ENCODE measurements at regions of chr16 and their contacts with region 1.

Region 1: DNA sequence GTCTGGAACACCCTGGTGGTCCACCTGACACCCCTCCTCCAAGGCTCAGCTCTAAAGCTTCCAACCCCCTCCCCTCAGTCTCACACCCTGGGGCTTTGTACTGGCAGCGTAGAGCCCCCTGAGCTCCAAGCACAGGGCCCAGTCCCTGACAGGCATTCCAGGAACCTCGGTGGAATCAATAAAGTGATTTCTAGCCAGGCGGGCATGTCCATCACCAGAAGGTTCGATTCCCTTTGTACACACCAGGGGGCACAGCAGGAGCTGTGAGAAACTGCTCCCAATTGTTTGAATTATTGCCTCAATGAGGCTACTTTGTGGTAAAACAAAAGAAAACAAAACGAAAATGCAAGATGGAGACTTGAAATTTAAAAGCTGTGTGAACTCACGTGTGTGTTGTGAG is 51.8 kb downstream of the SMPD3 start:
- DNase-seq: no peak
- ATAC-seq: peak; percentile 29 to 44
- H3K4me3 ChIP-seq: no peak overlapping the region
- H3K27ac ChIP-seq: no peak overlapping the region
- H3K4me1 ChIP-seq: no peaks in the 10 kb centered on the region
- H3K27me3 ChIP-seq: no peaks in the 10 kb centered on the region

Region 2: GRCh38 chr16:68503334-68503733 is 106.9 kb after region 1 on chr16:
- intact Hi-C with region 1: loop called in 2 of 4 experiments (anchors 2 to 10 kb)
- DNase-seq: no peak
- ATAC-seq: no peak
- H3K4me3 ChIP-seq: no peak overlapping the region
- H3K27ac ChIP-seq: no peak overlapping the region
- H3K4me1 ChIP-seq: no peaks in the 10 kb centered on the region
- H3K27me3 ChIP-seq: no peaks in the 10 kb centered on the region

Region 3: GRCh38 chr16:68508641-68509240 is 112.3 kb after region 1 on chr16:
- intact Hi-C with region 1: loop called in 3 of 4 experiments (anchors 2 to 10 kb)
- DNase-seq: no peak
- ATAC-seq: no peak
- H3K4me3 ChIP-seq: no peak overlapping the region
- H3K27ac ChIP-seq: no peak overlapping the region
- H3K4me1 ChIP-seq: no peaks in the 10 kb centered on the region
- H3K27me3 ChIP-seq: no peaks in the 10 kb centered on the region

Region 4: DNA sequence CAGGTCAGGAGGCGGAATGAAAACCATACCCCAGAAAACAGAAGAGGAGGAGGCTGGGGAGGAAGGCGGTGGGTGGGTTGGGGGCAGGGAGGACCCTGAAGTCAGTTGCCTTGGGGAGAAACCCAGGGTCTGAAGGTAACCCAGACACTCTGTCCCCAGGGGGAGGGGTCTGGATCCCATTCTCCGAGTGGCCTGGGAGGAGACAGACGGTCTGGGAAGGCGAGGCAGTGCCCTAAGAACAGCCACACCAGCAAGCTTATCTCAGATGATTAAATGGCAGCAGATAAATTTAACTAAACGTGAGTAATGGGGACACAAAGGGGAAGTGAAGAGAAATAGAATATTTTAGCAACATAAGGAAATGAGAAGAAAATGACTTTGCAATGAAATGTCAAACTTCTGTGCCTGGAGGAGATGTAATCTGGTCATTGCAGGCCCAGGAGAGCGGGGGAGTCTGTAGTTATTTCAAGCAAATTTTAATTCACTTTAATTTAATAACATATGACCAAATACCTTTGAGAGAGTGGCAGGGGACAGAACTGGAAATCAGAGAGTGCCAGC is 121.2 kb after region 1 on chr16:
- intact Hi-C with region 1: loop called in 1 of 4 experiments (anchors 10 kb)
- DNase-seq: no peak
- ATAC-seq: no peak
- H3K4me3 ChIP-seq: no peak overlapping the region
- H3K27ac ChIP-seq: no peak overlapping the region
- H3K4me1 ChIP-seq: no peaks in the 10 kb centered on the region
- H3K27me3 ChIP-seq: no peaks in the 10 kb centered on the region

Region 5: DNA sequence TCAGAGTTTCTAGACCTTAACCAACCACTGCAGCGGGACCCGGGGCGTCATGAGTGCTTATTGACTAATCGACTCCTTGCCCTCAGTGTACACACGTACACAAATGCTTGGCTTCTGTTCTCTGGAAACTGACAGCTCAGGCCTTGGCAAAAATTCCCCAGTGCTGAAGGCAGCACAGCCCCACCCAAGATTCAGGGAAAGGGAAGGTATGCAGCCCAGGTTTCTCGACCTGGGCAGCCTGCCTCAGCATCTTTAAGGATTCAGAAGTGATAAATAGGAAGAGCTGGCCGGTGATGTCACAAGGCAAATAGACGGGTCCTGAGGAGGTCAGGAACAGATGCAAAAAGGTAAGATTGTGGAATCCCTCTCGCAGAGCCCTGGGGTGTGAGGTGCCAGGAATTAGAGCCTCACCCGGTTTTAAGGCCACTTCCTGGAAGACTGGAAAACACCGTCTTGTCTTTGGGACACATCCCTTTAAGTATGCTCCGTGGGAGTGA is 239.6 kb after region 1 on chr16:
- intact Hi-C with region 1: no loop called
- DNase-seq: no peak
- ATAC-seq: no peak
- H3K4me3 ChIP-seq: no peak overlapping the region
- H3K27ac ChIP-seq: no peak overlapping the region
- H3K4me1 ChIP-seq: no peaks in the 10 kb centered on the region
- H3K27me3 ChIP-seq: no peaks in the 10 kb centered on the region